ENCODE measurements at regions of chr1 and their contacts with region 1.

Region 1: GRCh38 chr1:27392096-27392777 is at the start of gene GPR3:
- DNase-seq: peak; percentile 94
- H3K4me3 ChIP-seq: peak within 1 kb of the TSS; percentile 28 to 73 (median 48)
- H3K27ac ChIP-seq: peak within 1 kb of the TSS in 2 of 8 donors; percentile 41 to 50
- H3K4me1 ChIP-seq: peaks cover 21 to 64% (median 42%) of the 10 kb centered on the region in 6 donors
- H3K27me3 ChIP-seq: peaks cover 0 to 13% (median 0%) of the 10 kb centered on the region in 7 donors
- CTCF ChIP-seq: peak; percentile 19 to 68 (median 54)
- POLR2A ChIP-seq: no peak
- total RNA-seq, gene GPR3: 0.17 to 0.40 (median 0.28) TPM in 3 of 7 donors, not detected in the others

Region 2: GRCh38 chr1:27300341-27301051 is 91.7 kb before region 1 on chr1:
- intact Hi-C with region 1: loop called (anchors 2 kb)
- DNase-seq: peak; percentile 93
- H3K4me3 ChIP-seq: no peak overlapping the region
- H3K27ac ChIP-seq: peak overlapping the region; percentile 39 to 75 (median 66)
- H3K4me1 ChIP-seq: peaks cover 7 to 39% (median 19%) of the 10 kb centered on the region in 6 donors
- H3K27me3 ChIP-seq: no peaks in the 10 kb centered on the region
- CTCF ChIP-seq: peak; percentile 98 to 100 (median 99)
- POLR2A ChIP-seq: no peak

Region 3: DNA sequence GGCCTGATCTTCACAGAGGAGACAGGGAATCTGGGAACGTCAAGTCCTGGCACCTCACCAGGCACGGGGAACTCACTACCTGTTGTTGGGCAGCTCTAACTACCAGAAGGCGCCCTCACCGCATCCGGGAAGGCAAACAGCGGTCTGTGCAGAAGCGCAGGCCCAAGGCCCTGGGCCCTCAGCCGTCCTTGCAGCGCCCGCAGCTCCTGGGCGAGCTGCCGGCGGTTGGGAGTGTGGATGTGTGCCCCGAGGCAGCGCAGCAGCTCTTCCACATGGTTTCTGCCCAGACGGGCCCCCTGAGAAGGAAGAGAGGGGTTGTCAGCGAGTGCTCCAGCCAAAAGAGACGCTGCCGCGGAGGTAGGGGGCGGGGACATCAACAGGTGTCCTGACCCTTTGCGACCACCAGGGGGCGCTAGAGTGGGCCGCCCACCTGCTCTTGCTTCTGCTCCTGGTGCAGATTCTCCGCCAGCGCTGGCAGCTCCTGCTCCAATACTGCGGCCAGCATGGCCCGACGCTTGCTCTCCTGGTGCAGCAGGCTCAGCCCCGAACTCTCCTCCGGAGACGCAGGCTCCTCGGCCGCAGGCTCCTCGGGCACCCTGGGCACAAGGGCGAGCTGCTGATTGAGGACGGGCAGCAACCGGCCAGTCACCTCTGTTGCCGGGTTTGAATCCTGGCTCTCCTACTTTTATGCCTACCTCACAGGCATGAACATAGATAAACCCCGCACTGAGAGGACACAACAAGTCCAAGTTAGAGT is 34.8 kb before region 1 on chr1:
- intact Hi-C with region 1: loop called (anchors 5 kb)
- DNase-seq: peak; percentile 96
- H3K4me3 ChIP-seq: peak overlapping the region; percentile 29 to 66 (median 34)
- H3K27ac ChIP-seq: peak overlapping the region; percentile 15 to 72 (median 51)
- H3K4me1 ChIP-seq: peaks cover 21 to 58% (median 37%) of the 10 kb centered on the region in 6 donors
- H3K27me3 ChIP-seq: peaks cover 0 to 4% (median 0%) of the 10 kb centered on the region in 7 donors
- CTCF ChIP-seq: peak; percentile 94 to 100 (median 99)
- POLR2A ChIP-seq: no peak